Left cardiac atrium (tissue), 4 donors: ENCODE measurements at regions of chr1 and their contacts with region 1.

Region 1: GRCh38 chr1:81717230-81717629 is 83.5 kb upstream of the ADGRL2 start:
- DNase-seq: no peak
- ATAC-seq: no peak

Region 2: DNA sequence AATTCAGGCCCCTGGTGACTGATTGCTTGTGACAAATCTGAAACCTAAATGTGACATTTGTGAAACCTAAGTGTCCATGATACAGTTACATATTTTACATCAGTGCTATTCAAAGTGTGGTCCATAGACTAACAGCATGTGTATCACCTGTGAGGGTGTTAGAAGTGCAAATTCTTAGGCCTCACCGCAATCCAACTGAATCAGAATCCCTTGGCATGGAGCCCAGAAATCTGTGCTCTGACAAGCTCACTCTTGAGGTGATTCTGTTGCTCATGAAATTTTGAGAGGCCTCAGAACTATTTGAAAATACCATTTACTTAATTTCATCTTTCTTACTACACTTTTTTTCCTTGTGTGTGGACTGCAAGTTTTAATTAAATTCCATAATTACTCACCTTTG is 671.4 kb after region 1 on chr1:
- intact Hi-C with region 1: loop called in 1 of 2 experiments (anchors 5 kb)
- DNase-seq: no peak
- ATAC-seq: no peak